ENCODE measurements at regions of chr12 and their contacts with region 1.

Region 1: DNA sequence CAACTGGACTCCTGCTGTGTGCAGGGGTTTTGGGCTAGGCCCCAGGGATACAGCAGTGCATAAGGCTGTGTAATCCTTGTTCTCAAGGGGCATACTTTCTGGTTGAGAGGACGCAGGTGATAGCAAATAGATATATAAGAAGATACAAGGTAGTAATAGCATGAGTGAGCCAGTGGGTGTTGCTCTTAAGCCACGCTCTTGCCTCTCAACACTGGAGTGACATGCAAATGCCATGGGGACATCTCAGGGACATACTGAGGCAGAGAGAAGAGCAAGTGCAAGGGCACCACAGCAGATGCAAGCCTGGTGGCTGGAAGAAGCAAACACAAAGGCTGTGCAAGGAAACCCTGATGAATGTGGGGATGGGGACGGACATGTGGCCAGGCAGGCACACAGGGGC is 223.3 kb downstream of the CHST11 start:
- DNase-seq: peak; percentile 82
- H3K4me3 Mint-ChIP-seq: peak overlapping the region; percentile 10
- H3K27ac Mint-ChIP-seq: peak overlapping the region; percentile 72
- H3K4me1 Mint-ChIP-seq: peaks cover 68% of the 10 kb centered on the region
- H3K27me3 Mint-ChIP-seq: no peaks in the 10 kb centered on the region

Region 2: GRCh38 chr12:104387190-104387589 is 292.9 kb before region 1 on chr12:
- intact Hi-C with region 1: no loop called
- DNase-seq: no peak
- H3K4me3 Mint-ChIP-seq: no peak overlapping the region
- H3K27ac Mint-ChIP-seq: no peak overlapping the region
- H3K4me1 Mint-ChIP-seq: peaks cover 10% of the 10 kb centered on the region
- H3K27me3 Mint-ChIP-seq: no peaks in the 10 kb centered on the region

Region 3: DNA sequence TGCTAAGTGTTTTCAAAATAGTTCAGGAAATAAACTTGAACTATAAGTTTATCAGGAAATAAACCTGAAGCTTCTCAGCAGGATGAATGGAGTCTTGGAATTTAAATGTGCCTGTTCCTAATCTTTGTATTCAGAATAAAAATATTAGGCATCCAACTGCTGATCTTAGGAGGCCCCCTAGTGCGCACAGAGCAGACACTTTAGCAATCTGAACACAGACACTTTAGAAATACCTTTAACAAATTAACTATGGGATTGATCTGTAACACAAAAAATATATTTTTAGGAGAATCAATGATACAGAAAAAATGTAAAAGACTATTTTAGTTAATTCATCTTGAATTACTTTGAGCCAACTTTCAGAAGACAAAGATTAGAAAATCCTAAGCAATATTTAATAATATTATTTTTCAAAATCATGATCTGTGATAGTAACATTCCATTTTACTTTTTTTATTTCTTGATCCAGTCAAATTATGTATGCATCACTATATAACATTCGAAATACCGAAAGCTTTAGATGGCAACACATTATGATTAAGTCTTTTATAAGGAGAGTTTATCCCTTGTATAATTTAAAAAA is 197.1 kb after region 1 on chr12:
- intact Hi-C with region 1: loop called (anchors 1 kb)
- DNase-seq: peak; percentile 76
- H3K4me3 Mint-ChIP-seq: no peak overlapping the region
- H3K27ac Mint-ChIP-seq: no peak overlapping the region
- H3K4me1 Mint-ChIP-seq: peaks cover 3% of the 10 kb centered on the region
- H3K27me3 Mint-ChIP-seq: peaks cover 23% of the 10 kb centered on the region

Region 4: DNA sequence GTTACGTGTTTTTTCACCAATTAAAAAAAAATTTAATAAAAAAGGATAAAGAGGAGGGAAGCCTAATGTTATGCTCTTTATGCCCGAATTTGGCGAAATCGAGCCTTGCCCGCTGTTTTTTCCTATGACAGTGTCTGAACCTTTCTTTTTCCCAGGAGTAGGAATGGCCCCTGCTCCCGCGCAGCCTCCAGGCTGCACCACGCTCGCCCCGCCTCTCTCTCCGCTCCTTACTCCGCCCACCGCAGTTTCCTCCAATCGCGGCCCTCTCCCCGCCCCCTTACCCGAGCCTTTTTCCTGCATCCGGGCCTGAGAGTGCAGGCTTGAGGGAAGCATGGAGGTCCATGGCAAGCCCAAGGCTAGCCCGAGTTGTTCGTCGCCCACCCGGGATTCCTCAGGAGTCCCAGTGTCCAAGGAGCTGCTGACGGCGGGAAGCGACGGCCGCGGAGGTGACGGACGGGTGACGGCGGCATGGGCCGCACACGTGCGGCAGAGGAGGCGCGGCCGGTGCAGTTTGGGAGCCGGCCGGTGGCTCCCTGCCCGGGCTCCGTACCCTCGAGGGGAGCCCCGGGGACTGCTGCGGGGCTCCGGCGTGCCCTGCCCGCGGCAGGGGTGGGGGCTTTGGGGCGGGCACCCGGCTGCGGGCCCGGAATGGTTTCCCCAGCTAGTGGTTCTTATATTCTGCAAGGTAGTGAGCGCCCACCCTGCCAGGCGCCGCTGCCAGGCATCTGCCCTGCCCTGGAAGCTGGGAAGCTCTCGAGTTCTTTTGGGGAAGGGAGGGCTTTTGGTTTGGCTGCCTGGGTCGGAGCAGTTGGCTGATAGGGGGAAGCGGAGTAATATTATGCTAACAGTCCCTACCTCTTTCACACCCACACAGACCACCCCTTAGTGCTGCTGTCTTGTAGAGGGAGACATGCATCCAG is 306.2 kb after region 1 on chr12 and contains the start of gene NOPCHAP1:
- intact Hi-C with region 1: loop called (anchors 5 kb)
- DNase-seq: peak; percentile 97
- H3K4me3 Mint-ChIP-seq: peak within 1 kb of the TSS; percentile 89
- H3K27ac Mint-ChIP-seq: peak within 1 kb of the TSS; percentile 85
- H3K4me1 Mint-ChIP-seq: peaks cover 37% of the 10 kb centered on the region
- H3K27me3 Mint-ChIP-seq: peaks cover 7% of the 10 kb centered on the region
- total RNA-seq, gene NOPCHAP1: 39.8 and 41.3 TPM in 2 replicates

Measured in activated CD4-positive, alpha-beta T cell treated with anti-CD3 and anti-CD28 coated beads, Interleukin-2, amount 10 ng/mL, durations not matched to agents 24 days and 14 days (primary cell).